ENCODE measurements at regions of chr10 and their contacts with region 1.

Region 1: DNA sequence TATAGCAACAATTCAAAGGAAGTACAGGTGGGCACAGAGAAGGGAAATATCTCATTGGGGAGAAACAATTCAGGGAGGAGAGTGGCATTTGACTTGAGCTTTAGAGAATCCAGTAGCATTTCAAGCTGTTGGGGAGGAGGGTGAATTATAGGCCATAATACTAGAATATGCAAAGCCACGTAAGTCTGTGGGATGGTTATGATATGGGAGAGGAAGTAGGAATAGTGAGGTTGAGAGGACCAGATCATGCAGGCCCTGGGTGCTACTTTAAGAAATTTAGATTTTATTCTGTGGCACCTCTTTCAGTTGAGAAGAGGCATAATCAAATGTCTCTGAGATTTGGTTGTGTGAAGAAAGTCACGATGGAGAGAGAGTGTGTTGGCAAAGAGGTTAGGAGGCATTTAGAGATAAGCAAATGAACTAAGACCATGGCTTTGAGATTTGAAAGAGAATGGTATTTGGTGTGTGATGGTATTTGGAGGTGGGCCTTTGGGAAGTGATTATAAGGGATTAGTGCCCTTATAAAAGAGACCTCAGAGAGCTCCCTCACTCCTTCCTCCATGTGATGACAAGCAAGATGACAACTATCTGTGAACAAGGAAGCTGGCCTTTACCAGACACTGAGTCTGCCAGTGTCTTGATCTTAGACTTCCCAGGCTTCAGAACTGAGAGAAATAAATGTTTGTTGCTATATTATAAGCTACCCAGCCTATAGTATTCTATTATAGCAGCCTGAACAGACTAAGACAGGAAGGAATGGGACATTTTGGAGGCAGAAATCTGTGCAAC is 15.1 kb downstream of the ADD3 start:
- DNase-seq: no peak
- ATAC-seq: no peak
- H3K4me3 Mint-ChIP-seq: no peak overlapping the region
- H3K27ac Mint-ChIP-seq: peak overlapping the region; percentile 51
- H3K4me1 Mint-ChIP-seq: peaks cover 50% of the 10 kb centered on the region
- H3K27me3 Mint-ChIP-seq: no peaks in the 10 kb centered on the region
- CTCF ChIP-seq: no peak

Region 2: GRCh38 chr10:110036640-110037039 is 13.7 kb after region 1 on chr10:
- CTCF ChIA-PET with region 1: no interaction called
- POLR2A ChIA-PET with region 1: interaction called, 3 read pairs
- intact Hi-C with region 1: loop called (anchors 1 kb)
- DNase-seq: no peak
- ATAC-seq: peak; percentile 25
- H3K4me3 Mint-ChIP-seq: peak overlapping the region; percentile 57
- H3K27ac Mint-ChIP-seq: peak overlapping the region; percentile 11
- H3K4me1 Mint-ChIP-seq: peaks cover 73% of the 10 kb centered on the region
- H3K27me3 Mint-ChIP-seq: no peaks in the 10 kb centered on the region
- CTCF ChIP-seq: no peak

Region 3: GRCh38 chr10:111732166-111732785 is 1709.4 kb after region 1 on chr10:
- CTCF ChIA-PET with region 1: no interaction called
- POLR2A ChIA-PET with region 1: no interaction called
- intact Hi-C with region 1: no loop called
- DNase-seq: no peak
- ATAC-seq: no peak
- H3K4me3 Mint-ChIP-seq: no peak overlapping the region
- H3K27ac Mint-ChIP-seq: no peak overlapping the region
- H3K4me1 Mint-ChIP-seq: no peaks in the 10 kb centered on the region
- H3K27me3 Mint-ChIP-seq: no peaks in the 10 kb centered on the region
- CTCF ChIP-seq: no peak

Measured in activated B cell treated with CpG ODN at 0.5 μM for 24 hours (primary cell).